Activated CD4-positive, alpha-beta T cell treated with anti-CD3 and anti-CD28 coated beads for 36 hours (primary cell): ENCODE measurements at regions of chr4 and their contacts with region 1.

Region 1: DNA sequence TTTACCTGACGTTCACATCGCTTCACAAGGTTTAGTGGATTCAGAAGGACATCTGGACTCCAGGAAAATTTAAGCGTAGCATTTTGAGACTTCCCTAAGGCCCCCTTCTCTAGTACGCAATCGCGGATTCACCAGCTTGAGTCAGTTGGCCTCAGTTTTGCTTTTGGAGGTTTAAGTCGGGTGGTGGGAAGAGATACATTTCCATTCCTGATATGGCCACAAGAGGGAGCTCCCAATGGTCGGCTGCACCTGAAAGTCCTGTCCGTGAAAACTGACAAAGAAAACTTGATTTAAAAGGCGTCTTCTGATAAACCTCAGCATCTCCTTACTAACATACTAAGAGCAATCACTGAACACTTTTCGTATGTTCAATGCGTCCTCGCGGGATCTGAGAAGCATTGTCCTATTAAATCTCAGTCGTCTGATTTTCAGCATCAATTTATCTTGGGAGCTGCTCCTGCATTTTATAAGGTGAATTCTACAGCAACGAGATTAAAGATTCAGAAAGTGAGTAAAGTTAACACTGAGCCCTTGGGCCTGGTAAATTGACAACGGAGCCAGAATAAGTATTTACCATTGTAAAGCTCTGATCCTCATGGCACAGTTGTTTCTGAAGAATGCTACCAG is 50.6 kb downstream of the LGI2 start:
- DNase-seq: peak; percentile 68
- ATAC-seq: peak; percentile 47
- H3K4me3 Mint-ChIP-seq: no peak overlapping the region
- H3K27ac Mint-ChIP-seq: no peak overlapping the region
- H3K4me1 Mint-ChIP-seq: peaks cover 9% of the 10 kb centered on the region
- H3K27me3 Mint-ChIP-seq: peaks cover 16% of the 10 kb centered on the region

Region 2: GRCh38 chr4:24472514-24473308 is 507.5 kb before region 1 on chr4:
- CTCF ChIA-PET with region 1: no interaction called
- POLR2A ChIA-PET with region 1: interaction called, 3 read pairs
- intact Hi-C with region 1: loop called in 1 of 2 experiments (anchors 5 kb)
- DNase-seq: peak; percentile 75
- ATAC-seq: peak; percentile 54
- H3K4me3 Mint-ChIP-seq: peak overlapping the region; percentile 79
- H3K27ac Mint-ChIP-seq: peak overlapping the region; percentile 64
- H3K4me1 Mint-ChIP-seq: peaks cover 29% of the 10 kb centered on the region
- H3K27me3 Mint-ChIP-seq: peaks cover 58% of the 10 kb centered on the region

Region 3: GRCh38 chr4:24642981-24643547 is 337.1 kb before region 1 on chr4:
- CTCF ChIA-PET with region 1: no interaction called
- POLR2A ChIA-PET with region 1: no interaction called
- intact Hi-C with region 1: no loop called
- DNase-seq: no peak
- ATAC-seq: no peak
- H3K4me3 Mint-ChIP-seq: no peak overlapping the region
- H3K27ac Mint-ChIP-seq: no peak overlapping the region
- H3K4me1 Mint-ChIP-seq: no peaks in the 10 kb centered on the region
- H3K27me3 Mint-ChIP-seq: peaks cover 15% of the 10 kb centered on the region

Region 4: DNA sequence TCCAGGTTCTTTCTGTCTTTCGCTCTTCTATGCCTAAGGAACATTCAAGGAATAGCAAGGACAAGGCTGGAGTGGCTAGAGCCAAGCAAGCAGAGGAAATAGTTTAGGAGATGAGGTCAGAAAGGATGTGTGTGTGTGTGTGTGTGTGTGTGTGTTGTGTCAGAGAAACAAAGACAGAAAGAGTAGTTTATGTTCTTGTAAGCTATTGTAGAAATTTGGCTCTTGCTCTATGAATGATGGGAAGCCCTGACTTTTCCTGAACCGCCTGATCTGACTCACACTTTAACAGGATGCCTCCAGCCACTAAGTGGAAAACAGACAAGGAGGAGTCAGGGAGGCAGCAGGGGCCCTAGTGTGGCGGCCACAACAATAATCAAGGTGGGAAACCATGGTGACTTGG is 10.8 kb after region 1 on chr4:
- CTCF ChIA-PET with region 1: interaction called, 28 read pairs
- POLR2A ChIA-PET with region 1: no interaction called
- intact Hi-C with region 1: no loop called
- DNase-seq: no peak
- ATAC-seq: no peak
- H3K4me3 Mint-ChIP-seq: no peak overlapping the region
- H3K27ac Mint-ChIP-seq: no peak overlapping the region
- H3K4me1 Mint-ChIP-seq: no peaks in the 10 kb centered on the region
- H3K27me3 Mint-ChIP-seq: peaks cover 3% of the 10 kb centered on the region

Region 5: GRCh38 chr4:25043548-25043947 is 63.4 kb after region 1 on chr4:
- CTCF ChIA-PET with region 1: interaction called, 14 read pairs
- POLR2A ChIA-PET with region 1: interaction called, 3 read pairs
- intact Hi-C with region 1: loop called in 1 of 2 experiments (anchors 1 kb)
- DNase-seq: no peak
- ATAC-seq: no peak
- H3K4me3 Mint-ChIP-seq: no peak overlapping the region
- H3K27ac Mint-ChIP-seq: no peak overlapping the region
- H3K4me1 Mint-ChIP-seq: no peaks in the 10 kb centered on the region
- H3K27me3 Mint-ChIP-seq: peaks cover 15% of the 10 kb centered on the region

Region 6: DNA sequence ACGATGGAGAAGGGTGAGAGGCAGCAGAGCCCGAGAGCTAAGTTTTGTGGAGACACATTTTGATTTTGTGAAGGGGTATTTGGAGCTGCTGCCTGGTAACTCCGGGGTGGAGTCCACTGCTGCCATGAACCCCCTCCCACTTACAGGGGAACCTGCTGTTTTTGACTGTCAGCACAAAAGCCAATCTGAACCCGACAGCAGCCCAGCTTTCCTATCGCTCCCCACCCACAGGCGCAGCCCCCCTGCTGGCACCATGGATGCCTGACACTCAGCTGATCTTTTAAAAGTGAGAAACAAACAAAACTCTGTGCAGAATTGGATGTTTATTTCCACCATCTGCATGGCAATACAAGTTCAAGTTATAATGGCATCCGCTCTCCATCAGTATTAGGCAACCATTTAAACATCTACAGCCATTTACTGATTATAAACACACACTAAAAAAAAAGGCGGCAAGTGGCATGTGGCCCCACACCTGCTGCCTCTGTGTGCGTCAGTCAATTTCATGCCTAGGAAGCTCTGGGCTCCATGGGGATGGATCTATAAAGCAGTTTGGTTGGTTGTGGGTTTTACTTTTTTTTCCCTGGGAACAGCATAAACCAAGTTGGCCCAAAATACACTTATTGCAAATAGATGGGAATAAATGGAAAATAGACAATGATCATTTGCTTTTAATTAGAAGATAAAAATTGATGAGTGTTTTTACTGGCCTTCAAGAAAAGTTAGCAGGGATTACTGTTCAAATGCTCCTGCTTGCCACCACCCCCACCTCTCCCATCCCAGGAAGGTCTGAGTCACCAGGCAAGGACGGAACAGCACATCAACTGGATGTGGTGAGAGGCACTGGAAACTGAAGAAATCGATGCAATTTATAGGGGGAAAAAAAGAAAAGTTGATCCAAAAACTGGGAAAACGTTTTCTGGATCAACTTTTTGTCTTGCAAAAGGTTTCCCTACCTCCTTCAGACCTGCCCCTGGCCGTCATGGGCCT is 134.0 kb after region 1 on chr4:
- CTCF ChIA-PET with region 1: no interaction called
- POLR2A ChIA-PET with region 1: no interaction called
- intact Hi-C with region 1: no loop called
- DNase-seq: no peak
- ATAC-seq: no peak
- H3K4me3 Mint-ChIP-seq: no peak overlapping the region
- H3K27ac Mint-ChIP-seq: no peak overlapping the region
- H3K4me1 Mint-ChIP-seq: no peaks in the 10 kb centered on the region
- H3K27me3 Mint-ChIP-seq: no peaks in the 10 kb centered on the region

Region 7: GRCh38 chr4:25367004-25367621 is 386.9 kb after region 1 on chr4:
- CTCF ChIA-PET with region 1: interaction called, 37 read pairs
- POLR2A ChIA-PET with region 1: no interaction called
- intact Hi-C with region 1: loop called (anchors 1 kb)
- DNase-seq: no peak
- ATAC-seq: no peak
- H3K4me3 Mint-ChIP-seq: no peak overlapping the region
- H3K27ac Mint-ChIP-seq: no peak overlapping the region
- H3K4me1 Mint-ChIP-seq: no peaks in the 10 kb centered on the region
- H3K27me3 Mint-ChIP-seq: no peaks in the 10 kb centered on the region